A549 (cell line): ENCODE measurements at regions of chr16 and their contacts with region 1.

Region 1: GRCh38 chr16:27367461-27368357 is 34.3 kb upstream of the IL21R start:
- DNase-seq: peak; percentile 74 to 87
- ATAC-seq: peak; percentile 69 to 77
- H3K4me3 ChIP-seq: no peak overlapping the region
- H3K27ac ChIP-seq: peak overlapping the region; percentile 25 to 83; a peak in 4 of 6 replicates
- H3K4me1 ChIP-seq: peaks cover 40% of the 10 kb centered on the region
- CTCF ChIP-seq: peak; percentile 91
- EP300 ChIP-seq: no peak
- POLR2A ChIP-seq: no peak
- RAD21 ChIP-seq: peak; percentile 93 to 97

Region 2: GRCh38 chr16:27109666-27110523 is 257.8 kb before region 1 on chr16:
- CTCF ChIA-PET with region 1: interaction called, 11 read pairs
- POLR2A ChIA-PET with region 1: no interaction called
- DNase-seq: peak; percentile 44 to 55
- ATAC-seq: peak; percentile 85 to 88
- H3K4me3 ChIP-seq: peak overlapping the region; percentile 47
- H3K27ac ChIP-seq: peak overlapping the region; percentile 25 to 57; a peak in 2 of 6 replicates
- H3K4me1 ChIP-seq: 0 out of 3 replicates have a peak, but pooled peaks cover 3% of the 10 kb centered on the region
- CTCF ChIP-seq: peak; percentile 91
- EP300 ChIP-seq: no peak
- POLR2A ChIP-seq: no peak
- RAD21 ChIP-seq: peak; percentile 70 to 84

Region 3: DNA sequence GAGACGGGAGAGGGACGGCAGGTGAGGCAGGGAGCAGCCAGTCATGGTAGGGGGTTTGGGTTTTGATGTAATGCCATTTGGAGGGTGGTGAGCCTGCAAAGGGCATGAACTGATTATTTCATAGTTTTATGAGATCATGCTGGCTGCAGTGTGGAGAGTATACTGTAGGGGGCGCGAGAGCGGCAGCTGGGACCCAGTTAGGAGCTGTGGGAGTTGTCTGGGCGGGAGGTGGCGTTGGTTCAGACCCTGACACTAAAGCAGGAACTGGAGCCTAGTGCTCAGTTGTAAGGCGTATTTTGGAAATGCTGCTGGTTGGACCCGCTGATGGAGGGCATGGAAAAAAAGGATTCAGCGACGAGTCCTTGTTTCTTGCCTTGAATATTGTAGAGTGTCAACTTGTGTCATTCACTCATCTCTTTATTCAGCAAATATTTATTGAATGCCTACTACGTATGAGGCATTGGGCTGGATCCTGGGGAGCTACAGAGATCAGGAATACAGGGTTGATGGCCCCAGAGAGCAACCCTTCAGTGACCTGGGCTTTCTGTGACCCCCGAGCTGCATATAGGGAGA is 188.1 kb before region 1 on chr16:
- CTCF ChIA-PET with region 1: interaction called, 57 read pairs
- POLR2A ChIA-PET with region 1: no interaction called
- DNase-seq: peak; percentile 58 to 69
- ATAC-seq: peak; percentile 54 to 83; a peak in 4 of 6 replicates
- H3K4me3 ChIP-seq: no peak overlapping the region
- H3K27ac ChIP-seq: no peak overlapping the region
- H3K4me1 ChIP-seq: peaks cover 8% of the 10 kb centered on the region
- CTCF ChIP-seq: peak; percentile 55
- EP300 ChIP-seq: no peak
- POLR2A ChIP-seq: no peak
- RAD21 ChIP-seq: peak; percentile 47 to 73

Region 4: GRCh38 chr16:27222249-27223225 is 145.2 kb before region 1 on chr16:
- CTCF ChIA-PET with region 1: interaction called, 291 read pairs
- POLR2A ChIA-PET with region 1: no interaction called
- DNase-seq: no peak
- ATAC-seq: peak in 1 of 2 experiments; percentile 24; a peak in 3 of 6 replicates
- H3K4me3 ChIP-seq: no peak overlapping the region
- H3K27ac ChIP-seq: no peak overlapping the region
- H3K4me1 ChIP-seq: peaks cover 6% of the 10 kb centered on the region; the same call in 2 of the 3 replicates
- CTCF ChIP-seq: no peak
- EP300 ChIP-seq: no peak
- POLR2A ChIP-seq: no peak
- RAD21 ChIP-seq: no peak

Region 5: GRCh38 chr16:27321011-27321915 is 46.4 kb before region 1 on chr16:
- CTCF ChIA-PET with region 1: interaction called, 14 read pairs
- POLR2A ChIA-PET with region 1: no interaction called
- DNase-seq: no peak
- ATAC-seq: peak in 1 of 2 experiments; percentile 11; a peak in 1 of 6 replicates
- H3K4me3 ChIP-seq: no peak overlapping the region
- H3K27ac ChIP-seq: peak overlapping the region in 1 of 2 experiments; percentile 56; a peak in 3 of 6 replicates
- H3K4me1 ChIP-seq: peaks cover 36% of the 10 kb centered on the region
- CTCF ChIP-seq: no peak
- EP300 ChIP-seq: no peak
- POLR2A ChIP-seq: no peak
- RAD21 ChIP-seq: no peak

Region 6: GRCh38 chr16:27392671-27393070 is 25.0 kb after region 1 on chr16:
- CTCF ChIA-PET with region 1: interaction called, 10 read pairs
- POLR2A ChIA-PET with region 1: no interaction called
- DNase-seq: no peak
- ATAC-seq: no peak
- H3K4me3 ChIP-seq: no peak overlapping the region
- H3K27ac ChIP-seq: no peak overlapping the region
- H3K4me1 ChIP-seq: no peaks in the 10 kb centered on the region
- CTCF ChIP-seq: no peak
- EP300 ChIP-seq: no peak
- POLR2A ChIP-seq: no peak
- RAD21 ChIP-seq: no peak

Region 7: GRCh38 chr16:27414758-27415431 is 47.2 kb after region 1 on chr16:
- CTCF ChIA-PET with region 1: no interaction called
- POLR2A ChIA-PET with region 1: no interaction called
- DNase-seq: no peak
- ATAC-seq: no peak
- H3K4me3 ChIP-seq: no peak overlapping the region
- H3K27ac ChIP-seq: no peak overlapping the region
- H3K4me1 ChIP-seq: no peaks in the 10 kb centered on the region
- CTCF ChIP-seq: no peak
- EP300 ChIP-seq: no peak
- POLR2A ChIP-seq: no peak
- RAD21 ChIP-seq: no peak